ENCODE measurements at regions of chr1 and their contacts with region 1.

Region 1: DNA sequence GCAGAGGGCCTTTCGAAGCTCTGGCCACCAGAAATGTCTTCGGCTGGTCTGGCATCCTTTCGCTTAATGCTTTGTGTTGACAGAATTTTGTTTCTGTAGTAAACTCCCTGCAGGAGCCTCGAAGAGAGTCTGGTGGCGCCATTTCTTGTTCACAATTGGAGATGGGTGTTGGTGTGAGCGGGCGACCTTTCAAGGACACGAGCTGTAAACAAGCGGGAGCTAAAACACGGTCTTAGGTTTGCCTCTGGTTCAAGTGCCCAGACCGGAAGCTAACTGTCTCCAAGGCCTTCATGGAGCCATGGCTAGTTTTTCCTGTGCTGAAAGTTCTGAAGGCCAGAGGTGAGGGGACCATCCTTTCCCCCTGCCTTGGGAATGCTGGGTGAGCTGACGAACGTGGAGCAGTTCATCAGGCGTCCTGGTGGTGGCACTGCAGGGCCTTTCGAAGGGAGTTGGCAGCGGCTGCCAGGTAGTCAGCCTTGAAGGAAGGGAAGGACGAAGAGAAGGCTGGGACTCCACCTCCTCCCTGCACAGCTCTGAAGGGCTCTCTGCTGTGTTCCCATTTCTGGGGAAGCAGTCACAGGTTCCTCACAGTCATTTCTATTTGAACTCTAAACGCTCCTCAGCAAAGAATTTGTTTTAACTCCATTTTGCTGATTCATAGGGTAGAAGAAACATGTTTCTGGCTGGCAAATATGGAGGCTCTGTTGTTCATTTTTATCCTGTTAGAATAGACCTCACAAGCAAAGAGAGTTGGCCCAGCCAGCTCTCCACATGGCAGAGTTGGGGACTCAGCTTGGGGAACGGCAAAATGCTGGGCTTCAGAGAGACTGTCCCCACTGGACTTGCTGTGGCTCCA is 35.2 kb downstream of the URB2 start:
- DNase-seq: peak; percentile 83 to 88
- H3K4me3 ChIP-seq: no peak overlapping the region
- H3K27ac ChIP-seq: no peak overlapping the region
- H3K4me1 ChIP-seq: no peaks in the 10 kb centered on the region
- H3K27me3 ChIP-seq: no peaks in the 10 kb centered on the region
- CTCF ChIP-seq: peak; percentile 92 to 95

Region 2: GRCh38 chr1:229388876-229389580 is 272.2 kb before region 1 on chr1:
- intact Hi-C with region 1: no loop called
- DNase-seq: no peak
- H3K4me3 ChIP-seq: no peak overlapping the region
- H3K27ac ChIP-seq: no peak overlapping the region
- H3K4me1 ChIP-seq: no peaks in the 10 kb centered on the region
- H3K27me3 ChIP-seq: peaks cover 0 to 27% of the 10 kb centered on the region in 2 donors
- CTCF ChIP-seq: no peak

Region 3: DNA sequence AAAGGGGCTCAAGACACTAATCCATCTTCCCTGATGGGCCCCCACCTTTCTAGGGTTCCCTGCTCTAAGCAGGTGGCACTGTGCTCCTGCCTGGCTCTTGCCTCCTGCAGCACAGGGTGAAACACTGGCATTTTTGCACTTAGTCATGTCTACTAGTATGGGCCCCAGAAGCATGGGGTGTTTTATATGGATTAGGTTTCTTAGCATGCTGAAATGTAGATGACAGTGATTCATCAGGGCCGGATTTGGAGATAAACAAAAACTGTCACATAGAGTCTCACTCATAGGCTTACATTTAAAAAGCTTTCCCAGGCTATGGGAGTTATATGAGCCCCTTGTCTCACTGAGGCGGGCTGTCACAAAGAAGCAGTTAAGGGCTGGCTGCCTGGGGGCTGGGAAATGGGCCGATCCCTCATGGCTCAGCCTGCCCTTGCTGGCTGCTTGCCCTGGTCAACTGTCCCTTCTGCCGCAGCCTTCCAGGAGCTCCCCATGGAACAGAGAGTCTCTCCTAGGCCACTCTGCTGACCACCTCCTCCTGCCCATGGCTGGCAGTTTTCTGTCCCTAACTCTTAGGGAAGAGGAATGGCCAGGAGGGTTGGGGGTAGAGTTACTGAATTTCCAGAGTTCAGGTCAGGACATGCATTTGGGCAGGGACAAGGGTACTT is 412.3 kb after region 1 on chr1:
- intact Hi-C with region 1: loop called (anchors 10 kb)
- DNase-seq: no peak
- H3K4me3 ChIP-seq: no peak overlapping the region
- H3K27ac ChIP-seq: peak overlapping the region; percentile 35 to 69
- H3K4me1 ChIP-seq: peaks cover 0 to 88% (median 46%) of the 10 kb centered on the region in 4 donors
- H3K27me3 ChIP-seq: no peaks in the 10 kb centered on the region
- CTCF ChIP-seq: no peak

Region 4: DNA sequence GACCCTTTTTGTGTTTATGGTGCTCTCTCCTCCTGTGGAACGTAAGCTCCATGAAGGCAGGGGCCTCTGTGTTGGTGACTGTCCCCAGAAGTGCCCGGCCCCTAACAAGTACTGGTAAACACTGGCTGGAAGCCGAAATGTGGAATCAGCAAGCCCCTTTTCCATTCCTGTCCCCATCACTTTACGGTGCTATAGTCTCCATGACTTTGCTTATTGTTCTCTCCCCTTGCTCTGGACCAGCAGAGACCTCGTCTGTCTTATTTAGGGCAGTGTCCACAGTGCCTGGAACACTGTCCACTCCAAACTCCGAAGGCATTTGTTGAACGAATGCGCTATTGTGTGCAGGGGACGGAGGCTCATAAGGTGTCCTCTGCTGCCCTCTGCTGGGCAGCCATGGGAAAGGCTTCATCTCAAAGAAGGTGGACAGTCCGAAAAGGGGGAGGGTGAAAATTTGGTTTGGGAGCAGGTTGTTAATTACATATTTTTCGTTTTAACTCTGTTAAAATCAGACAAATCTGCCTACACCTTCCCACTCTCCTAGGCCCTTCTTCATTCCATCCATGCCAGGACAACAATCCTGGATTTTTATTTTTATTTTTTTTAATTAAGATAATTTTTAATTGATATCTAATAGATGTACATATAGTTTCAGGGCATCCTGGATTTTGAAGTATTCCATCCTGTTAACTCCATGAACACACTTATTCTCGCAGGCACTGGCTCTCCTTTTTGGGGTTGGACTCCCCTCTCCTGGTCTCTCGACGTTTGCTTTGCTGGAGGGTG is 649.3 kb after region 1 on chr1:
- intact Hi-C with region 1: loop called (anchors 2 kb)
- DNase-seq: peak; percentile 81 to 83
- H3K4me3 ChIP-seq: no peak overlapping the region
- H3K27ac ChIP-seq: no peak overlapping the region
- H3K4me1 ChIP-seq: peaks cover 0 to 3% (median 0%) of the 10 kb centered on the region in 4 donors
- H3K27me3 ChIP-seq: peaks cover 0 to 3% of the 10 kb centered on the region in 2 donors
- CTCF ChIP-seq: peak; percentile 87 to 93

Measured in tibial artery (tissue), 4 donors.